ENCODE measurements at regions of chr2 and their contacts with region 1.

Region 1: GRCh38 chr2:119407430-119408220 is 24.0 kb upstream of the TMEM37 start:
- DNase-seq: peak; percentile 71
- ATAC-seq: peak; percentile 56
- H3K4me3 ChIP-seq: no peak overlapping the region
- H3K27ac ChIP-seq: no peak overlapping the region
- H3K4me1 ChIP-seq: no peaks in the 10 kb centered on the region
- H3K27me3 ChIP-seq: no peaks in the 10 kb centered on the region
- CTCF ChIP-seq: peak; percentile 77

Region 2: DNA sequence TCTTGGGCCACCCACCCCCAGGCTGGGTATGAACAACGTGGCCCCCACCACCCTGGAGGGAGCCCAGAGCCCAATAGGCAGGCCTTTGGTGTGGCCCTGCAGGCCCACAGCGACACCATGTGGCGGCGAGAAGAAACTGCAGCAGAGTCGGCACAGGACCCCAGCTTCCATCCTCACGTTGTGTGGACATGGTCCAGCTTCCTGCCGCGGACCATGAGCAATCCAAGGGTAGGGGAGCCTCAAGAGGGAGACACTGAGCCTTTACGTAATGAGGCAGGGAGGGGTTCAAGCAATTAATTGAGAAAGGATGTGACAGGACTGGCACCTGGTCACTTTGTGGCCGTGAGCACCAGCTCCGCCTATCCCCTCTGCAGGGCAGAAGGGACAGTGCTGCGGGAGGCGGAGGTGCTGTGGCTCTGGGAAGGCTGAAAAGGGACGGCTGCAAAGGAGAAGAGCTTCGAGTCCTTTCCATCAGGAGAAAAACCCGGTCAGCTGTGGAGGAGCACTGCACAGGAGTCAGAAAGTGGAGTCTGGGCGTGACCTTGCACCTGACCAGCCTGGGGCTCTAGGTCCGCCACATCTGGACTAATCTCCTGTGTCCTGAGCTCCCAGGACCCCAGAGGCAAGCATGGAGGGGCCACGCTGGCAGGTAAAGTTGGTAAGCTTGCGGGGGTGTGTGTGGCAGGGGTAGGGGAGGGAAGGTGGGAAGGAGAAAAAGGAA is 68.8 kb after region 1 on chr2:
- CTCF ChIA-PET with region 1: no interaction called
- POLR2A ChIA-PET with region 1: no interaction called
- intact Hi-C with region 1: loop called (anchors 1 kb)
- DNase-seq: peak; percentile 77
- ATAC-seq: peak; percentile 86
- H3K4me3 ChIP-seq: peak overlapping the region; percentile 22; the same call in 1 of the 2 replicates
- H3K27ac ChIP-seq: no peak overlapping the region
- H3K4me1 ChIP-seq: 0 out of 2 replicates have a peak, but pooled peaks cover 4% of the 10 kb centered on the region
- H3K27me3 ChIP-seq: no peaks in the 10 kb centered on the region
- CTCF ChIP-seq: peak; percentile 97

Region 3: GRCh38 chr2:119659601-119660342 is 252.1 kb after region 1 on chr2:
- CTCF ChIA-PET with region 1: no interaction called
- POLR2A ChIA-PET with region 1: no interaction called
- intact Hi-C with region 1: loop called (anchors 1 kb)
- DNase-seq: peak; percentile 50
- ATAC-seq: peak; percentile 46
- H3K4me3 ChIP-seq: no peak overlapping the region
- H3K27ac ChIP-seq: no peak overlapping the region
- H3K4me1 ChIP-seq: no peaks in the 10 kb centered on the region
- H3K27me3 ChIP-seq: no peaks in the 10 kb centered on the region
- CTCF ChIP-seq: peak; percentile 92

Measured in PC-3 (cell line).